ENCODE measurements at regions of chr13 and their contacts with region 1.

Region 1: GRCh38 chr13:99656092-99656745 is 154.9 kb downstream of the TM9SF2 start:
- DNase-seq: peak; percentile 58
- ATAC-seq: peak; percentile 69

Region 2: GRCh38 chr13:99606324-99607066 is 49.7 kb before region 1 on chr13:
- intact Hi-C with region 1: no loop called
- DNase-seq: peak; percentile 94
- ATAC-seq: peak; percentile 98

Region 3: GRCh38 chr13:99617474-99618255 is 38.6 kb before region 1 on chr13:
- intact Hi-C with region 1: no loop called
- DNase-seq: peak; percentile 53
- ATAC-seq: peak; percentile 71

Region 4: DNA sequence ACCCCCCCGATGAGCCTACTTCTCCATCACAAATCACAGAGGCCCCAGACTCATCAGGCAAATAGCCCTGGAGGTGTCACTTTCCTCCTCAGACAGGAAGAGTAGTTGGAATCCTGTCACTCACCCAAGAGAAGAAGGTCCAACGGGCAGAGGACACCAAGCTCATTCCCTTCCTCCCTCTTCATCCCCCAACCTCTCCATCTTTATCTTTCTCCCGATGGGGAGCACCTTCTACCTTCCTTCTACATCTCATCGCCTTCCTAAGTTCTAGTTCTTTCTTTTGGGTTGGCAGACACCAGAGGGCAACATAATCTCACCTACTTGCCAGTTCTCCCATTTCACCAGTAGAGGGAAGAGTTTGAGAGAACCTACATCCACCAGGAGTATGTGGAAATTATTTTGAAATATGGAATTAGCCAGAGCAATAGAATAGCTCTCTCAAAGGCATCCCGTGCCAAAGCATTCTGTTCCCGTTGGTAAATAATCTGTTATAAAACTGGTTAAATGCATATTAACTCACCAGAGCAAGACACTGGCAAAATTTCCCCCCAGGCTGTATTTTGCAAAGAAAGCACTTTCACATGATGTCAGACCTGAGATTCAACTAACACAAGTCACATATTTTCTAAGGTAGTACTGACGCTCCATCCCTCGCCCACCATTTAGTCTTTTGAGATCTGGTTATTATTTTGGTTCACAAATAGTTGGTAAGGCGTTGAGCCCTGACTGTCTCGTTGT is 260.3 kb after region 1 on chr13:
- intact Hi-C with region 1: loop called (anchors 10 kb)
- DNase-seq: no peak
- ATAC-seq: peak; percentile 69

Region 5: DNA sequence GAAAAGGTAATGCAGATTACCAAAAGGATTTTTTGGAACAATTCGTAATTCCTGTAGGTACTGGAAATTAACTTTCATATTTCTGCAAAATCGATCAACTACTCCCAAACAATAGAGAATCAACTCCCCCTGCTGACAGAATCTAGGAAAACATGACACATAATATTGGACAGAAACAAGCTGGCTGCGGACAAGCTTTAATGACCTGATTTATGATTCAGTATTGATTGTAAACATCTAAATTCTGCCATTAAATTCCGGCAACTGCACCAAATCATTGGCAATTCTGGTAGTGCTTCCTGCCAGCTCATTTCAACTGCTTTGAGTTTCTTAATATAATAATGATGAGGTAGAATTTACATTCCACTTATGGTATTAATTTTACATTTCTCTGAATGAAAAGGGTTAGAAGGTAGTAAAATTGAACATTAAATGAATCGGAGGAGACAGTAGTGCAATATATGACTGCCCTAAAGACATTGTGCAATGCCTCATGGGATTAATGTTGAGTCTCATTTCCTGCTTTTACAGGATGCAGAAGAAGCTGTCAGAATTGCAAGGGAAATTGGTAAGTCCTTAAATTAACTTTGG is 579.2 kb after region 1 on chr13:
- intact Hi-C with region 1: loop called (anchors 5 kb)
- DNase-seq: no peak
- ATAC-seq: no peak

Region 6: DNA sequence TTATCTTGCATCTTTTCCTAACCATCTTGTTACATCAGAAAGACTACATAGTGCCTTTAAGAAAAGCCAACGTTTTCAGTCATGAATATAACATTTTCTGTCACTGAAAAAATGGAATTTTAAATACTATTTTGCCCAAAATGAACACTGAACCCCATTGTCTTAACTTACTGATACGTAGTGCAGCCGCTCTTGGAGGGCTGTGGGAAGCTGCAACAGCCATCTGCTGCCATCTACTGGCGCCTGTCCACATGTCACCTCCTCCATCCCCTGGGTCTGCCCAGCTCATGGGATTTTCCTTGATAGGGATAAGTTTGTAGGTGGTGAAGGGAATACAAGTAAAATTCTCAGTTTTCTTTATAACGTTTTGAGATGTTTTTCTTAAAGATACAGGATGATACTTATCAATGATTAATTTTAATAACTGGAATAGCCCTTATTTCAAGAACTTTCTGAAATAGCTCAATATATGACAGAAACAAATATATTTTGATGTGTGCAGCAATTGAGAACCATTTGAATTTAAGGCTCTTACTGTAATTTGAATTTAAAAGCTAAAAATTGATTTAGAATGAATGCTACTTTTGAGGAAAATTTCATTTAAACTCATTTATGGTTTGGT is 858.7 kb after region 1 on chr13:
- intact Hi-C with region 1: loop called (anchors 2 kb)
- DNase-seq: peak; percentile 87
- ATAC-seq: peak; percentile 93

Measured in left ventricle myocardium superior (tissue), 1 donor.